Breast epithelium (tissue), 4 donors: ENCODE measurements at regions of chr17 and their contacts with region 1.

Region 1: GRCh38 chr17:72053449-72053848 is 67.4 kb upstream of the SOX9 start:
- DNase-seq: no peak
- H3K4me3 ChIP-seq: peak overlapping the region in 2 of 3 donors; percentile 56 to 57
- H3K27ac ChIP-seq: peak overlapping the region; percentile 82 to 86
- H3K4me1 ChIP-seq: no peaks in the 10 kb centered on the region
- H3K27me3 ChIP-seq: no peaks in the 10 kb centered on the region
- CTCF ChIP-seq: no peak
- POLR2A ChIP-seq: no peak

Region 2: DNA sequence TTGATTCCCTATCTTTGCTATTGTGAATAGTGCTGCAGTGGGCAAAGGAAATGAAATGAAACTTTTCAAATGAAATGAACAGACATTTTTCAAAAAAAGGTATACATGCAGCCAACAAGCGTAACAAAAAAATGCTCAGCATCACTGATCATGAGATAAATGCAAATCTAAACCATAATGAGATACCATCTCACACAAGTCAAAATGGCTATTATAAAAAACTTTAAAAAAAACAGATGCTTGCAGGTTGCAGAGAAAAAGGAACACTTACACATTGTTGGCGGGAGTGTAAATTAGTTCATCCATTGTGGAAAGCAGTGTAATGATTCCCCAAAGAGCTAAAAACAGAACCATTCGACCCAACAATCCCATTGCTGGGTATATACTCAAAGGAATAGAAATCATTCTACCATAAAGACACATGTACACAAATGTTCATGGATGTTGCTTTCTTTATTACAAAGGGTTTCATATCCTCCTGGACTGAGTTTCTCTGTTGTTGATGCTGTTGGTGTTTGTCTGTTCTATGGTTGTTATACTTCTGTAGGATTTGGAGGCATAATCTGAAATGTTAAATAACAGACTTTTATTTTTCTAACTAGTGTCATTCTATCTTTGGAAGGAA is 31.9 kb before region 1 on chr17:
- intact Hi-C with region 1: no loop called
- DNase-seq: no peak
- H3K4me3 ChIP-seq: no peak overlapping the region
- H3K27ac ChIP-seq: no peak overlapping the region
- H3K4me1 ChIP-seq: no peaks in the 10 kb centered on the region
- H3K27me3 ChIP-seq: no peaks in the 10 kb centered on the region
- CTCF ChIP-seq: no peak
- POLR2A ChIP-seq: no peak

Region 3: DNA sequence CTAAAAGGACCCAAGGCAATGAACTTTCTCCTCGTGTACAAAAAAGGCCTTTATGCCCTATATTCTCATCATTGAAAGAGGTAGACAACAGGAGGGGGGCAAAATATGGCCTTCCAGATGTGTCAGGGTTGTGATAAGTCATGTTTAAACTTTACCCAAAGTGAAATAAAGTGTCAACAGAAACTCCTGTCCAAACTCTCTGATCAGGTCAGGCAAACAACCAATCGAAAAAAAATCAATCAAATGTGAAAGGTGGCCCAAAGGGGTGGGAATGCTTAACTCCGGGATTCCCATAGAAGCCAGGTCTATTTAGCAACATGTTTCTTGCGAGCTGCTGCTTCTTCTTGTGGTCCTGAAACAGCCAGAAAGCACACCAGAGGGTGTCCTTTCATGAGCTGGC is 17.9 kb after region 1 on chr17:
- intact Hi-C with region 1: loop called (anchors 1 kb)
- DNase-seq: no peak
- H3K4me3 ChIP-seq: no peak overlapping the region
- H3K27ac ChIP-seq: no peak overlapping the region
- H3K4me1 ChIP-seq: no peaks in the 10 kb centered on the region
- H3K27me3 ChIP-seq: no peaks in the 10 kb centered on the region
- CTCF ChIP-seq: no peak
- POLR2A ChIP-seq: no peak